ENCODE measurements at regions of chr22 and their contacts with region 1.

Region 1: GRCh38 chr22:33579448-33580093 is 340.7 kb downstream of the LARGE1 start:
- DNase-seq: no peak
- H3K4me3 ChIP-seq: no peak overlapping the region
- H3K27ac ChIP-seq: no peak overlapping the region
- H3K4me1 ChIP-seq: no peaks in the 10 kb centered on the region
- H3K27me3 ChIP-seq: no peaks in the 10 kb centered on the region
- CTCF ChIP-seq: peak; percentile 53 to 56
- POLR2A ChIP-seq: no peak

Region 2: DNA sequence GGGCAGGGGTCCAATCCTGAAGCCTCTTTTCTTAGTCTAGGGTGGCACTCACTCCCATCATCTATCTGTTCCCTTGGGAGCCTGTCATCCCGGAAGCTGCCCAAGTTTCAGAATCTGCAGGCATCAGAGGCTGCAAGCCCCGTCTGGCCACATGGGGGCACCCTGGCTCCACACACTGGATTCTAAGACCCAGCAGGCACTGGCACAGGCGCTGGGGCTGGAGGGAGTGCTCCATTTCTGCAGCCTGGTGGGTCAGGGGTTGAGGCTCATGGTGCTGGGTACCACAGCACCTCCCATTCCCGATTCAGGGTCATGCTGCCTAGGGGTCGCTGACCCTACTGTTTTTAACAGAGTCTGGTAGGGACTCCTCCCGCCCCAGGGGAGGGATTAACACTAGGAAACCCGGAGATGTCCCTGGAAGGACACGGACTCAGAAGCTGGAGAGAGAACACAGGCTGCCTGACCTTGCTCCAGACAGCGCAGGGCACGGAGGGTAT is 277.5 kb before region 1 on chr22:
- CTCF ChIA-PET with region 1: no interaction called
- POLR2A ChIA-PET with region 1: no interaction called
- dilution Hi-C with region 1: no loop called
- intact Hi-C with region 1: loop called (anchors 1 kb)
- DNase-seq: peak; percentile 5
- H3K4me3 ChIP-seq: no peak overlapping the region
- H3K27ac ChIP-seq: no peak overlapping the region
- H3K4me1 ChIP-seq: no peaks in the 10 kb centered on the region
- H3K27me3 ChIP-seq: no peaks in the 10 kb centered on the region
- CTCF ChIP-seq: peak; percentile 68 to 74
- POLR2A ChIP-seq: no peak

Region 3: DNA sequence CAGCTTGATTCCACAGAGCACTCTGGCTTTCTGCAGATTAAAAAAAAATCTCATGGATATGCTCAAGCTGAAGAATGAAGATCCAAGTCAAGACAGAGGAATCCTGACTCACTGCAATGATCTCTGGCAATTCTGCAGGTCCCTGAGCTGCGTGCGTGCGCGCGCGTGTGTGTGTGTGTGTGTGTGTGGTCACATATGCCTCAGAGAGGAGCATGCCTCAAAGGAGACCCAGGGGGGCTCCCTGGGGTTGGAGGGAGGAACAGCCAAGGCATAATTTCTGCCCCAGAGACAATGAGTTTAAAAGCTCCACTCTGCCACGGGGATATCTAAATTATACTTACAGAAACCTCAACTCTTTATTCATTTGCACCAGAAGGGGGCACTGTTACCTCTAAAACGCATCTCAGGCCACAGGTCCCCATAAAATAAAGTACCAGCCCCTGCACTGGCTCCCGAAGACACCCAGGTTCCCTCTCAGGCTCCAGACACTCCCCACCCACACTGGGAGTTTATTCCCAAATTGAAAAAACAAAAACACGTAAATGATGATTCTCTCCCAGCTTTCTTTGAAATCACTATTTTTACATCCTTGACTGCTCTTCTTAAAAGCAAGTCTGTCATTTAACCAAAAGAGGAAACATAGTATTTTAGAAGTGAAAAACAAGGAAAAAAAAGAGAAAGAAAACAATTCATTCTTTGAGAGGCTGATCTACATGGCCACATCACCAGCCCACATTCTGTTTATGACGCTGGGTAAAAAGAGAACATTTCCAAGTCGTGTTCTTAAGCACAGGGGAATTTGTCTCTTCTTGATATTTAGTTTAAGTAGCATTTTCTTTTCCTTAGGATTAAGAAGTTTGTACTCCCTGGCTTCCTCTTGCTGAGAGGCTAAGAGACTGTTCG is 60.2 kb before region 1 on chr22:
- CTCF ChIA-PET with region 1: no interaction called
- POLR2A ChIA-PET with region 1: no interaction called
- dilution Hi-C with region 1: no loop called
- intact Hi-C with region 1: loop called (anchors 2 kb)
- DNase-seq: no peak
- H3K4me3 ChIP-seq: no peak overlapping the region
- H3K27ac ChIP-seq: no peak overlapping the region
- H3K4me1 ChIP-seq: no peaks in the 10 kb centered on the region
- H3K27me3 ChIP-seq: no peaks in the 10 kb centered on the region
- CTCF ChIP-seq: peak in 1 of 2 donors; percentile 8
- POLR2A ChIP-seq: no peak

Region 4: DNA sequence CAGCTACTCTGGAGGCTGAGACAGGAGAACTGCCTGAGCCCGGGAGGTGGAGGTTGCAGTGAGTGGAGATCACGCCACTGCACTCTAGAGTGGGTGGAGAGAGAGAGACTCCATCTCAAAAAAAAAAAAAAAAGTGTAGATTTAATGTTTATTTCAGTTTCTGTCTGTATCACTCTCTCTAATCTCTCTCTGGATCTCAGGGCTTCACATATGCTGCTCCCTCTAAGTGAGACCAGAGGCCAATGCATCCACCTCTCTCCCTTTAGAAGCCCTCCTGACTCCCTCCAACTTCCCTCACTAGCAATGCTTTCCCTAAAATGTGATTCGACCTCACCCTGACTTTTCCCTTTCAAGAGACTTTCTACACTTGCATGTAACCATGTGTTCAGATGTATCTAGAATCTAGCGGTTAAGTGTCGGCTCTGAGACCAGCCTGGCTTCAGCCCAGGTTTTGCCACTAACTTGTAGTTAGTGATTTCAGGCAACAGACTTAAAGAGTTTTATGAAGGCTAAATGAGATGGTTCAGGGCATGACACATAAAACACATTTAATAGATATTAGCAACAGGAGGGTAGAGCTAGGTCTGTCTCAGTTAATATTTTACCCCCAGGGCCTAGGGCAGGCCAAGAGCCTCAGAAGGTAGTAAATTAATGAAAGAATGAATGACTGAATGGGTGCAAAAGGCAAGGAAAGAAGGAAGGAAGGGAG is 23.6 kb before region 1 on chr22:
- CTCF ChIA-PET with region 1: no interaction called
- POLR2A ChIA-PET with region 1: no interaction called
- dilution Hi-C with region 1: no loop called
- intact Hi-C with region 1: no loop called
- DNase-seq: no peak
- H3K4me3 ChIP-seq: no peak overlapping the region
- H3K27ac ChIP-seq: no peak overlapping the region
- H3K4me1 ChIP-seq: no peaks in the 10 kb centered on the region
- H3K27me3 ChIP-seq: no peaks in the 10 kb centered on the region
- CTCF ChIP-seq: no peak
- POLR2A ChIP-seq: no peak